ENCODE measurements at regions of chr22 and their contacts with region 1.

Region 1: GRCh38 chr22:41688365-41689211 is at the start of gene SNU13:
- DNase-seq: peak; percentile 89
- H3K4me3 ChIP-seq: peak within 1 kb of the TSS; percentile 70 to 92 (median 90)
- H3K27ac ChIP-seq: peak within 1 kb of the TSS; percentile 81
- H3K4me1 ChIP-seq: no peaks in the 10 kb centered on the region
- H3K27me3 ChIP-seq: no peaks in the 10 kb centered on the region
- CTCF ChIP-seq: no peak
- total RNA-seq, gene SNU13: 73.0 to 187 TPM

Region 2: DNA sequence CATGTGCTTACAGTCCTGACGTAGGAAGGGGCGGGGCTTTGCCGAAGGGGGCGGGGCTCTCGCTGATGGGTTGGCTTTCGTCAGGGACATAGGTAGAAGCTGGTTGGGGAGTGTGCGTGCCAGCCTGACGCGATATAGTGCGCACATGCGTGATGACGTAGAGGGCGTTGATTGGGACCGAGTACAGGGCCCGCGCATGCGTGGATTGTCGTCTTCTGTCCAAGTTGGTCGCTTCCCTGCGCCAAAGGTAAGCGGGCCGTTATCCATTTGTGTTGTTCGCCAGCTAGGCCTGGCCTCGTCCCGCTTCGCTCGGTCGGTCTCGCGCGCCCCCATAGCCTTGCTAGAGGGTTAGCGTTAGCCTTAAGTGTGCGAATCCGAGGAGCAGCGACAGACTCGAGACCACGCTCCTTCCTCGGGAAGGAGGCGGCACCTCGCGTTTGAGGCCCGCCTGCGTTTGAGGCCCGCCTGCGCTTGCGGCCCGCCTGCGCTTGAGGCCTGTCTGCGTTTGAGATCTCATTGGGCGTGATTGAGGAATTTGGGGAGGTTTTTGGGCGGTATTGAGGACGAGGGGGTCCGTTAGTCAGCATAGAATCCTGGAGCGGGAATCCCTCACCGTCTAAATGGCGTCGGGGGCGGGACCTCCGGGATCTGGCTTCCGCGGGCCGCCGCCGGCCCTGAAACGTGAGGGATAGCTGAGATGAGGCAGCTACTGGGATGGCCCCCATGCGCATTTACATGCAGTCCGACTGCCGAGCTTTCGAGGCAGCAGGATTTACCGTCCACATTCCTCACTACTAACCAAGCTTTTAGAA is 67.3 kb before region 1 on chr22 and contains the start of gene XRCC6:
- CTCF ChIA-PET with region 1: no interaction called
- dilution Hi-C with region 1: no loop called
- in situ Hi-C with region 1: no loop called
- intact Hi-C with region 1: loop called (anchors 2 kb)
- DNase-seq: peak; percentile 98
- H3K4me3 ChIP-seq: peak within 1 kb of the TSS; percentile 74 to 98 (median 88)
- H3K27ac ChIP-seq: peak within 1 kb of the TSS; percentile 83
- H3K4me1 ChIP-seq: peaks cover 15% of the 10 kb centered on the region
- H3K27me3 ChIP-seq: no peaks in the 10 kb centered on the region
- CTCF ChIP-seq: no peak
- total RNA-seq, gene XRCC6: 223 to 263 TPM

Region 3: GRCh38 chr22:41666661-41667258 is 21.8 kb before region 1 on chr22:
- CTCF ChIA-PET with region 1: no interaction called
- dilution Hi-C with region 1: no loop called
- in situ Hi-C with region 1: no loop called
- intact Hi-C with region 1: loop called (anchors 1 kb)
- DNase-seq: peak; percentile 85
- H3K4me3 ChIP-seq: peak overlapping the region; percentile 2 to 45 (median 21)
- H3K27ac ChIP-seq: peak overlapping the region; percentile 91
- H3K4me1 ChIP-seq: peaks cover 16% of the 10 kb centered on the region
- H3K27me3 ChIP-seq: no peaks in the 10 kb centered on the region
- CTCF ChIP-seq: peak; percentile 94 to 100

Region 4: DNA sequence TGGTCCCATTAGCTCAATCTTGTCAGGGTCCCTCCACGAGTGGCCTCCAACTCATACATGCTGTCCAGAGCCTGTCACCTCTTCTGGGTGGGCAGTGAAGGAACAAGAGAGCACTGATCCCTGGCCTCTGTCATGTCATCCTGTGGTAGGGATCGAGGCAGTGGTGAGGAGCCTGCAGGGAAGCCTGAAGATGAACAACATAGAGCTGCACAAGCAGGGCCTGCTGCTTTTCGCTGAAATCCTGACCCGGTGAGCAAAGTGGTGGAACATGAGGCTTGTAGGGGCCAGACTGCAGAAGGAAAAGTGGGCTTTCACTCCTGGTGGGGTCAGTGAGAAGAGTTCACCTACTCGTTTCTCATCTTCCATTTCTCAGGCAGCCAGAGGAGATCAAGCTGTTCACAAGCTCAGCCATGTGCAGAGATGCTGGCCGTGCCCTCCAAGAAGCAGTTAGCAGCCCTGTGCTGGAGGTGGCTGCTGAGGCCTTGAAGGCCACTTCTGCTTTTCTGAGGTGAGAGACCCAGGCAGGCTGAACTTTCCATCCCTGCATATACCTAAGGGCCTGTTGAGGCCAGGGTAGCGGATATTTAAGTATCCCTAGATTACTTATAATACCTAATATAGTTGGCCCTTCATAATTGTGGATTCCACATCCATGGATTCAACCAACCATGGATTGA is 43.6 kb after region 1 on chr22:
- CTCF ChIA-PET with region 1: no interaction called
- dilution Hi-C with region 1: no loop called
- in situ Hi-C with region 1: no loop called
- intact Hi-C with region 1: no loop called
- DNase-seq: no peak
- H3K4me3 ChIP-seq: no peak overlapping the region
- H3K27ac ChIP-seq: no peak overlapping the region
- H3K4me1 ChIP-seq: no peaks in the 10 kb centered on the region
- H3K27me3 ChIP-seq: no peaks in the 10 kb centered on the region
- CTCF ChIP-seq: no peak